B cell (primary cell): ENCODE measurements at regions of chr14 and their contacts with region 1.

Region 1: GRCh38 chr14:102795060-102795925 is 18.0 kb downstream of the TRAF3 start:
- DNase-seq: peak; percentile 64
- ATAC-seq: peak; percentile 73
- H3K4me3 ChIP-seq: no peak overlapping the region
- H3K4me3 Mint-ChIP-seq: peak overlapping the region; percentile 56
- H3K27ac ChIP-seq: peak overlapping the region; percentile 48 to 50
- H3K27ac Mint-ChIP-seq: peak overlapping the region; percentile 86
- H3K4me1 ChIP-seq: peaks cover 53 to 54% of the 10 kb centered on the region in 2 donors
- H3K4me1 Mint-ChIP-seq: peaks cover 79% of the 10 kb centered on the region
- H3K27me3 ChIP-seq: no peaks in the 10 kb centered on the region
- H3K27me3 Mint-ChIP-seq: no peaks in the 10 kb centered on the region
- CTCF ChIP-seq: no peak

Region 2: DNA sequence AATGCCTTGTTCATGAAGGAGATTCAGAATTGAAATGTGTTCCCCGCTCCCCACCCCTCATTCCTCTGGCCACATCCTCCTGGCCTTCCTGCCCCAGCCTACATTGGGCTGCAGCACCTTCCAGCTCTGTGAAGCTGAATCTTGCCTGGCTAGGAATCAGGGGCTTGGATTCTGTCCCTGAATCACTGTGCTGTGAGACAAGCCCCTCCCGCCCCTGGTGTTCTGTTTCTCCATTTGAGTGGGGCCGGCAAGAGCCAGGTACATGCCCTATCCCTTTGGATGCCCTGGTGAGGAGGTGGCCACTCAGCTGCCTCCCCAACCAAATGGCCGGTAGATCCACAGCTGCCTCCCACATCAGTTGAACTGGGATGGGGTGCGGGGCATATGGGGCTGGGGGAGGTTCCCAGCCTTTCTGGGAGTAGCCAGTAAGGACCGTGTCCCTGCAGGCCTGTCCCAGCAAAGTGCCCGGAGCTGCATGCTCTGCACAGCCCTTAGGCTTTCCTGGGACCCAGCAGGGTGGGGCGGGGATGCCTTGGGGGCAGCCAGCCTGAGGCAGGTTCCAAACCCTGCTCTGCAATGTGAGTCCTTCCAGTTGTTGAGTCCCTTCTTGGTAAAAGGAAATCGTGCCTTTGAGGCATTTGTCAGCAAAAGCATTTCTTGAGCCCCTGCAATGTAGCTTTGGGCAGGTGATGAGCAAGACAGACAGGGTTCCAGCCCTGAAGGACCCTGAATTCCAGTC is 56.4 kb before region 1 on chr14:
- CTCF ChIA-PET with region 1: no interaction called
- POLR2A ChIA-PET with region 1: interaction called, 12 read pairs
- intact Hi-C with region 1: no loop called
- DNase-seq: no peak
- ATAC-seq: no peak
- H3K4me3 ChIP-seq: no peak overlapping the region
- H3K4me3 Mint-ChIP-seq: no peak overlapping the region
- H3K27ac ChIP-seq: no peak overlapping the region
- H3K27ac Mint-ChIP-seq: no peak overlapping the region
- H3K4me1 ChIP-seq: no peaks in the 10 kb centered on the region
- H3K4me1 Mint-ChIP-seq: no peaks in the 10 kb centered on the region
- H3K27me3 ChIP-seq: no peaks in the 10 kb centered on the region
- H3K27me3 Mint-ChIP-seq: no peaks in the 10 kb centered on the region
- CTCF ChIP-seq: no peak

Region 3: DNA sequence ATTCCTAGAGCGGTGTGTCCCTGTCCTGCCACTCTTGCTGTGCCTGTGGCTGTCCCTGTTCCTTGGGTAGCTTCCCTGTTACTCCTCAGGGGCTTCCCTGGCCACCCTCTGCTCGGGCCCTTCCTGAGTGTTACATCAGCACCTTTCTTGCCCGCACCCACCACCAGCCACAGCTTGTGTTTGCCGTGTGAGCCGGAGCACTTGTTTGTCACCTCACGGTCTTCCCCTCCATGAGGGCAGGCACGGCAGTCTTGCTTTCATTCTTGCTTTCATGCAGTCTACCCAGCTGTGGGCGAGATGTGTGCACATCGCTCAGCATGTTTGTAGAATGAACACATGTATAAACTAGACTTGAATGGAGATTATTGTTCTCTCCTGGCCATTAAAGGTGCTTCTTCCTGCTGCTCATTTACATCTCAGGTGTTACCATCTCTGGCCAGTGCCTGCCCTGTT is 23.9 kb after region 1 on chr14:
- CTCF ChIA-PET with region 1: no interaction called
- POLR2A ChIA-PET with region 1: interaction called, 8 read pairs
- intact Hi-C with region 1: loop called (anchors 1 kb)
- DNase-seq: peak; percentile 55
- ATAC-seq: peak; percentile 69
- H3K4me3 ChIP-seq: peak overlapping the region in 1 of 5 experiments; percentile 22
- H3K4me3 Mint-ChIP-seq: peak overlapping the region; percentile 81
- H3K27ac ChIP-seq: peak overlapping the region in 1 of 2 donors; percentile 32
- H3K27ac Mint-ChIP-seq: peak overlapping the region; percentile 91
- H3K4me1 ChIP-seq: peaks cover 39 to 51% of the 10 kb centered on the region in 2 donors
- H3K4me1 Mint-ChIP-seq: peaks cover 78% of the 10 kb centered on the region
- H3K27me3 ChIP-seq: no peaks in the 10 kb centered on the region
- H3K27me3 Mint-ChIP-seq: no peaks in the 10 kb centered on the region
- CTCF ChIP-seq: no peak

Region 4: GRCh38 chr14:102928412-102929240 is 133.3 kb after region 1 on chr14:
- CTCF ChIA-PET with region 1: no interaction called
- POLR2A ChIA-PET with region 1: interaction called, 10 read pairs
- intact Hi-C with region 1: no loop called
- DNase-seq: peak; percentile 89
- ATAC-seq: peak; percentile 90
- H3K4me3 ChIP-seq: peak overlapping the region in 4 of 5 experiments; percentile 48 to 77 (median 60)
- H3K4me3 Mint-ChIP-seq: peak overlapping the region; percentile 87
- H3K27ac ChIP-seq: no peak overlapping the region
- H3K27ac Mint-ChIP-seq: peak overlapping the region; percentile 50
- H3K4me1 ChIP-seq: peaks cover 39 to 45% of the 10 kb centered on the region in 2 donors
- H3K4me1 Mint-ChIP-seq: peaks cover 35% of the 10 kb centered on the region
- H3K27me3 ChIP-seq: peaks cover 0 to 49% (median 11%) of the 10 kb centered on the region in 4 experiments
- H3K27me3 Mint-ChIP-seq: peaks cover 14% of the 10 kb centered on the region
- CTCF ChIP-seq: no peak

Region 5: DNA sequence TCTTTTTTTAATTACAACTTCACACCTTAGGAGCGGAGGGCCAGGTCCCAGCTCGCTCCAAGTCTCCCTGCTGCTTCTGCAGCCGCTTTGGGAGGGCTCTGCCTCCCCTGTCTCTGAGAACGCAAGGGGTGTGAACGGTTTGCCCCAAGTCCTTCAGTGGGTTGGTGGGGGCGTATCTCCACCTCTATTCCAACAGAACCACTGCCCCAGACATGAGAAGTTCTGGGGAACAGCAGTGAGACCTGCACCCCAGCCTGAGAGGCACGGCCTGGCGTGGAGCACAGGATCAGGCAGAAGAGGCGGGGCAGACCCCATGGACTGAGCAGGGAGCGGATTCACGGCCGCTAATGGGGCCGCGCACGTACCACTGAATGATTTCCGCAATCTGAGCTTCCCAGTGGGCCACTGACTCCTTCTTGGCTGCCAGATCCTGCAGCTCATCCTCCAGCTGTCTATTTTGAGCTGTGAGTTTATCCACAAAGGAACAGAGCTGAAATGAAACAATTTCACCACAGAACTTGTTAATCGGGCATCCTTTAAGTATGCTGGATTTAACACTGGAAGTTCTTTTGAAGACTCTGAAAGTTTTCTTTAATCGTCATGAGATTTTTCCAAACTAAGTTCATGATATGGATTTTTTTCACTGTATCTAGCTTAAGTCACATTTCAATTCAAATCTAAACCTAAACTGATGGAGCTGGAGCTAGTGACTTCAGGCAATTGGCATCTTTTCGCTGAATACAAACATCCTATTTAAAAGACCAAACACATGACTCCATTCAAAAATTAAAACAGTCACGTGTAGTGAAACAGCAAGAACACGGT is 171.6 kb after region 1 on chr14:
- CTCF ChIA-PET with region 1: no interaction called
- POLR2A ChIA-PET with region 1: no interaction called
- intact Hi-C with region 1: no loop called
- DNase-seq: no peak
- ATAC-seq: no peak
- H3K4me3 ChIP-seq: no peak overlapping the region
- H3K4me3 Mint-ChIP-seq: no peak overlapping the region
- H3K27ac ChIP-seq: no peak overlapping the region
- H3K27ac Mint-ChIP-seq: no peak overlapping the region
- H3K4me1 ChIP-seq: no peaks in the 10 kb centered on the region
- H3K4me1 Mint-ChIP-seq: no peaks in the 10 kb centered on the region
- H3K27me3 ChIP-seq: no peaks in the 10 kb centered on the region
- H3K27me3 Mint-ChIP-seq: no peaks in the 10 kb centered on the region
- CTCF ChIP-seq: no peak

Region 6: DNA sequence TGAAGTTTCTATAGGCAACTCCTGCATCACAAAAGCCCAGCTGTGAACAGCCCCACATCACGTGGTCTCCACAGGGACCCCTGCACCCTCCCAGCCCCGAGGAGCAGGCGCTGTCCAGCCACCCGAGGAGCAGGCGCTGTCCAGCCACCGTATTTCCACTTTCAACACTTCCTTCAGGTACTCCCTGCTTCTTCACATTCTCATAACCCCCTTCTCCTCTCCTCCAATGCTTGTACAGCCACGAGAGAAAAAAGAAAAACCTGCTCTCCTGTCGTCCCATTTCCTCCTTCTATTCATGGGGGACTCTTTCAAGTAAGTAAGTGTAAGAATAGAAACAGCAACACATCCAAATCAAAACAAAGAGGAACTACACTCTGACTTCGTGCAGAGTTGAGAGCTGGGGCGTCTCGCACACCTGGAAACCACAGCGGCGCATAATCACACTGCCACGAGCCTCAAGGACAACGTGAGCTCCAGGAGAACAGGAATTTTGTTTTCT is 250.1 kb after region 1 on chr14:
- CTCF ChIA-PET with region 1: no interaction called
- POLR2A ChIA-PET with region 1: no interaction called
- intact Hi-C with region 1: no loop called
- DNase-seq: peak; percentile 57
- ATAC-seq: peak; percentile 76
- H3K4me3 ChIP-seq: peak overlapping the region in 3 of 5 experiments; percentile 18 to 42 (median 36)
- H3K4me3 Mint-ChIP-seq: peak overlapping the region; percentile 84
- H3K27ac ChIP-seq: peak overlapping the region in 1 of 2 donors; percentile 0
- H3K27ac Mint-ChIP-seq: peak overlapping the region; percentile 80
- H3K4me1 ChIP-seq: peaks cover 15% of the 10 kb centered on the region in 2 donors
- H3K4me1 Mint-ChIP-seq: peaks cover 30% of the 10 kb centered on the region
- H3K27me3 ChIP-seq: no peaks in the 10 kb centered on the region
- H3K27me3 Mint-ChIP-seq: no peaks in the 10 kb centered on the region
- CTCF ChIP-seq: no peak